PC-9 (cell line): ENCODE measurements at regions of chr7 and their contacts with region 1.

Region 1: GRCh38 chr7:6008668-6009611 is at the starts of genes AIMP2 and PMS2:
- DNase-seq: peak; percentile 98 to 99
- H3K4me3 ChIP-seq: peak within 1 kb of the TSS; percentile 100
- H3K27ac ChIP-seq: peak within 1 kb of the TSS; percentile 85
- H3K4me1 ChIP-seq: peaks cover 19% of the 10 kb centered on the region
- H3K27me3 ChIP-seq: no peaks in the 10 kb centered on the region
- CTCF ChIP-seq: no peak
- total RNA-seq, gene AIMP2: 65.1 and 73.8 TPM in 2 replicates
- total RNA-seq, gene PMS2: 30.4 and 32.1 TPM in 2 replicates

Region 2: DNA sequence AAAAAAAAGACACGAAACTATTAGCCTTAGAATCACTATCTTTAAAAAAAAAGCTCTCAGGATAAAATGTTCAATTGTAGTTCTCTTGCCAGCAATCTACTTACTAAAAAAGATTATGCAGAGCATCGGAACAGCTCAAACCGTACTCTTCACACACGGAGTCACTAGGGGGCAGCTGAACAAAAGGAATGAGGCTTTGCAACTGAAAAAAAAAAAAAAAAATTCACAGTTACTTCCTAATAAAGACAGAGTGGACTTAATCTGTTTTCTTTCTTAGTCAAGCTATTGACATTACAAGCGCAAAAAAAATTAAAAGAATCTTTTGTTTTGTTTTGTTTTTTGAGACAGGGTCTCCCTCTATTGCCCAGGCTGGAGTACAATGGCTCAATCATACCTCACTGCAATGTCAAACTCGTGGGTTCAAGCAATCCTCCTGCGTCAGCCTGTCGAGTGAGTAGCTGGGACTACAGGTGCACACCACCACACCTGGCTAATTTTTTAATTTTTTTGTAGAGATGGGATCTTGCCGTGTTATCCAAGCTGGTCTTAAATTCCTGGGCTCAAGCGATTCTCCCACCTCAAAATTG is 11.6 kb before region 1 on chr7:
- CTCF ChIA-PET with region 1: no interaction called
- POLR2A ChIA-PET with region 1: interaction called, 9 read pairs
- intact Hi-C with region 1: loop called (anchors 1 kb)
- DNase-seq: peak; percentile 54 to 70
- H3K4me3 ChIP-seq: no peak overlapping the region
- H3K27ac ChIP-seq: no peak overlapping the region
- H3K4me1 ChIP-seq: peaks cover 16% of the 10 kb centered on the region
- H3K27me3 ChIP-seq: no peaks in the 10 kb centered on the region
- CTCF ChIP-seq: peak; percentile 78

Region 3: GRCh38 chr7:6026011-6026819 is 17.3 kb after region 1 on chr7:
- CTCF ChIA-PET with region 1: no interaction called
- POLR2A ChIA-PET with region 1: interaction called, 18 read pairs
- intact Hi-C with region 1: no loop called
- DNase-seq: peak in 1 of 2 experiments; percentile 29
- H3K4me3 ChIP-seq: no peak overlapping the region
- H3K27ac ChIP-seq: no peak overlapping the region
- H3K4me1 ChIP-seq: no peaks in the 10 kb centered on the region
- H3K27me3 ChIP-seq: no peaks in the 10 kb centered on the region
- CTCF ChIP-seq: peak; percentile 57; the same call in 1 of the 2 replicates

Region 4: DNA sequence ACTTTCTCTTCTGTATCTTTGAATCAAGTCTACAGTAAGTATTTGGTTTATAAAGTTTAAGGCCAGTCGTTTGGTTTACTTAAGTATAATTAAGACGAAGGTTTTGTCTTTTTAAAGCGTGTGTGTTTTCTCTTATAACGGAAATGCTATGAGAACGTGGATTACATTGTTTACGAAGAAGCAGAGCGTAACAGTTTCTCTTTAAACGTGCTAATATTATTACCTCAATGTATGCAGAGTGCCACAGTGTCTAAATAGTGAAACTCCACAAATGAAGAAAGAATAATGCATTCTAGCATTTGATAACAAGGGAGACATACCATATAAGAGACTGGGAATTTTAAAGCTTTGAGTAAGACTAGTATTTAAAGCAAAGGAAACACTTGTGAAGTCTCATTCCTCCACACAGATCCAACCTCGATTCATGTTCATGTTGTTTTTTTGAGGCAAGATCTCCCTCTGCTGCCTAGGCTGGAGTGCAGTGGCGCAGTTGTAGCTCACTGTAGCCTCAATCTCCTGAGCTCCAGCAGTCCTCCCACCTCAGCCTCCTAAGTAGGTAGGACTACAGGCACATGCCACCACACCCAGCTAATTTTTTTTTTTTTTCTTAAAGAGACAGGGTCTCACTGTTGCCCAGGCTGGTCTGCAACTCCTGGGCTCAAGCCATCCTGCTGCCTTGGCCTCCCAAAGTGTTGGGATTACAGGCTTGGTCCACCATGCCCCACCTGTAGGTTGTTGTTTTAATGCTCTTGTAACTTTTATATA is 97.4 kb after region 1 on chr7:
- CTCF ChIA-PET with region 1: no interaction called
- POLR2A ChIA-PET with region 1: interaction called, 14 read pairs
- intact Hi-C with region 1: no loop called
- DNase-seq: peak in 1 of 2 experiments; percentile 22
- H3K4me3 ChIP-seq: peak overlapping the region; percentile 74
- H3K27ac ChIP-seq: peak overlapping the region; percentile 27
- H3K4me1 ChIP-seq: peaks cover 13% of the 10 kb centered on the region
- H3K27me3 ChIP-seq: no peaks in the 10 kb centered on the region
- CTCF ChIP-seq: no peak; the same call in 1 of the 2 replicates

Region 5: GRCh38 chr7:6435486-6436384 is 426.8 kb after region 1 on chr7:
- CTCF ChIA-PET with region 1: interaction called, 8 read pairs
- POLR2A ChIA-PET with region 1: no interaction called
- intact Hi-C with region 1: loop called (anchors 5 kb)
- DNase-seq: peak; percentile 73 to 84
- H3K4me3 ChIP-seq: no peak overlapping the region
- H3K27ac ChIP-seq: no peak overlapping the region
- H3K4me1 ChIP-seq: peaks cover 12% of the 10 kb centered on the region
- H3K27me3 ChIP-seq: no peaks in the 10 kb centered on the region
- CTCF ChIP-seq: peak; percentile 97